ENCODE measurements at regions of chr18 and their contacts with region 1.

Region 1: DNA sequence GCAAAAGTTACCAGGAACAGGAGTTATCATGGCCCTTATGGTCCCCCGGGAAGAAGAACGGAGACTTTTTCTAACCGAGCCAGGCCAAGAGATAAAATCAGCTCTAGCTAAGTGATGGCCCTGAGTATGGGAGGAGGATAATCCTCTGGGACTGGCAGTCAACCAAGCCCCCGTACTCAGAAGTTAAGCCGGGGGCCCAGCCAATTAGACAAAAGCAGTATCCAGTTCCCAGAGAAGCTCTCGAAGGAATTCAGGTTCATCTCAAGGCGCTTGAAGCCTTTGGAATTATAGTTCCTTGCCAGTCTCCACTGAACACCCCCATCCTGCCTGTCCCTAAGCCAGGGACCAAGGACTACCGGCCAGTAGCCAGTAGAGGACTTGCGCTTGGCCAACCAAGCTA is 365.3 kb upstream of the TCF4 start:
- DNase-seq: no peak
- H3K4me3 ChIP-seq: no peak overlapping the region
- H3K27ac ChIP-seq: no peak overlapping the region
- H3K4me1 ChIP-seq: no peaks in the 10 kb centered on the region
- H3K27me3 ChIP-seq: no peaks in the 10 kb centered on the region
- CTCF ChIP-seq: no peak
- POLR2A ChIP-seq: no peak

Region 2: GRCh38 chr18:54805571-54806334 is 1147.6 kb before region 1 on chr18:
- intact Hi-C with region 1: loop called (anchors 10 kb)
- DNase-seq: no peak
- H3K4me3 ChIP-seq: no peak overlapping the region
- H3K27ac ChIP-seq: no peak overlapping the region
- H3K4me1 ChIP-seq: no peaks in the 10 kb centered on the region
- H3K27me3 ChIP-seq: no peaks in the 10 kb centered on the region
- CTCF ChIP-seq: no peak
- POLR2A ChIP-seq: no peak